ENCODE measurements at regions of chr6 and their contacts with region 1.

Region 1: GRCh38 chr6:34414999-34415858 is 10.6 kb downstream of the RPS10 start:
- DNase-seq: peak; percentile 72
- ATAC-seq: peak; percentile 57
- H3K4me3 ChIP-seq: no peak overlapping the region
- H3K27ac ChIP-seq: no peak overlapping the region
- H3K4me1 ChIP-seq: peaks cover 14% of the 10 kb centered on the region
- H3K27me3 ChIP-seq: no peaks in the 10 kb centered on the region
- CTCF ChIP-seq: peak; percentile 80

Region 2: DNA sequence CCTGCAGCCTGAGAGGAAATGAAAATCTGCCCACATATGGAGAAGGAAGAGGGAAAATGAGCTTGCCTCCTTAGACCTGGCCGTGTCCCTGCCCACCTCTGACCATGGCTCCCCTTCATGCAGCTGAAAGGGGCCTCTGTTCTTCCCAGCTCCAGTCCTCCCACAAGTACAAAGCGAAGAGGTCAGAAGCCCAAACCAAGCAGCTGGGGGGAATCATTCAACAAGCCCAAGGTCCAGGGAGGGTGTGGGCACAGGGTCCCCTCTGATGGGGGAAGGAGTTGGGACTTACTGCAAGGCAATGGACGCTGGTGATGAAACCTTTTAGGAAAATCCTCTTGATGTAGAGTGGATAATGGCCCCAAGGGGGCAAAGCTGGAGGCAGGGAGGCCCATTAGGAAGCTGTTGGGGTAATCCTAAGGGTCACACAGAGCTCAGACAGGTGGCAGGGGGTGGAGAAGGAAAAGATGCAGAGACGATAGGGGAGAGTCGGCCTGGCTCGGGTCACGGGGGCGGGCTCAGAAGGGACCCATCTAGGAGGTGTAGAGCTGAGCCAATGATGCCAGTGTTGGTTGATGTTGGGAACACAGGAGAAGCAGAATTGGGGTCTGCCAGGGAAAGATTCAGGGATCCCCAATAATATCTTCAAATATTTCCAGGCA is 253.2 kb before region 1 on chr6:
- CTCF ChIA-PET with region 1: interaction called, 11 read pairs
- POLR2A ChIA-PET with region 1: no interaction called
- intact Hi-C with region 1: loop called (anchors 2 kb)
- DNase-seq: no peak
- ATAC-seq: no peak
- H3K4me3 ChIP-seq: no peak overlapping the region
- H3K27ac ChIP-seq: no peak overlapping the region
- H3K4me1 ChIP-seq: no peaks in the 10 kb centered on the region
- H3K27me3 ChIP-seq: no peaks in the 10 kb centered on the region
- CTCF ChIP-seq: no peak

Region 3: GRCh38 chr6:34196126-34196830 is 219.0 kb before region 1 on chr6:
- CTCF ChIA-PET with region 1: interaction called, 12 read pairs
- POLR2A ChIA-PET with region 1: no interaction called
- intact Hi-C with region 1: loop called (anchors 1 kb)
- DNase-seq: peak; percentile 80
- ATAC-seq: peak; percentile 95
- H3K4me3 ChIP-seq: peak overlapping the region; percentile 71
- H3K27ac ChIP-seq: no peak overlapping the region
- H3K4me1 ChIP-seq: peaks cover 9% of the 10 kb centered on the region
- H3K27me3 ChIP-seq: no peaks in the 10 kb centered on the region
- CTCF ChIP-seq: peak; percentile 97

Region 4: DNA sequence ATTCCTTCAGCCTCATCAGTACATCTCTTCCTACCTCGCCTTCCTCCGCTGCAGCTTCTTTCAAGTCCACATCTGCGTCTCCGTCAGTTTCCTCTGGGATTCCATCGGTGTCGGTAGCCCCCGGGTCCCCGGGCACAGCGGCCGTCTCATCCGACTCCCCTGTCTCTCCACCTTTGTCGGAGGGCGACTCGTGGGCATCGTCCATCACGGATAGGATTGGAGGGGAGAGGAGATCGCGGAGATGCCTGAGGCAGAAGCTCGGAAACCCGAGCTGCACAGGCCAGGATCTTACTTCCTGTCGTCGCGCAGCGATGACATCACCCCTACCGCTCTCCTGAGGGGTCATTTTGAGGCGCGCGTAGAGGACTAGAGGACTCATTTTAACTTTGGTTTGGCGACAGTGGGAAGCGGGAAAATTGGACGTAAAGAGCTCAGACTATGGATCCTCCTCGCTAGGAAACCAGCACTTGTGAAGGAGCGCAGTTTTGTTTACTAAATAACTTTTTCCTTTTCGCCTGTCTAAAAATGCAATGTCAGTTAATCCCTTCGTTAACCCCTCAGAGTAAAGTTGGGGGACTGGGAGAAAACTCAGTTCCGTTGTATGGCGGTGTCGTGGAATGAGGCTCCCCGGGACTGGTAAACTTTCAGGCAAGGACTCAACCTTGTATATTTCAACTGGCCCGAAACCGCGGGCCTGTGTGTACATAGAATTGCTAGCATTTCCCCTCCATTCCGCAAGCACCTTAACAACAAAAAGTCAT is 472.7 kb after region 1 on chr6 and contains the start of gene TAF11:
- CTCF ChIA-PET with region 1: no interaction called
- POLR2A ChIA-PET with region 1: no interaction called
- intact Hi-C with region 1: no loop called
- DNase-seq: peak; percentile 97
- ATAC-seq: peak; percentile 79
- H3K4me3 ChIP-seq: peak within 1 kb of the TSS; percentile 90
- H3K27ac ChIP-seq: peak within 1 kb of the TSS; percentile 48
- H3K4me1 ChIP-seq: peaks cover 12% of the 10 kb centered on the region
- H3K27me3 ChIP-seq: no peaks in the 10 kb centered on the region
- CTCF ChIP-seq: no peak
- total RNA-seq, gene TAF11: 24.1 and 28.9 TPM in 2 replicates